Activated naive CD4-positive, alpha-beta T cell treated with anti-CD3 and anti-CD28 coated beads for 36 hours (primary cell): ENCODE measurements at regions of chr19 and their contacts with region 1.

Region 1: DNA sequence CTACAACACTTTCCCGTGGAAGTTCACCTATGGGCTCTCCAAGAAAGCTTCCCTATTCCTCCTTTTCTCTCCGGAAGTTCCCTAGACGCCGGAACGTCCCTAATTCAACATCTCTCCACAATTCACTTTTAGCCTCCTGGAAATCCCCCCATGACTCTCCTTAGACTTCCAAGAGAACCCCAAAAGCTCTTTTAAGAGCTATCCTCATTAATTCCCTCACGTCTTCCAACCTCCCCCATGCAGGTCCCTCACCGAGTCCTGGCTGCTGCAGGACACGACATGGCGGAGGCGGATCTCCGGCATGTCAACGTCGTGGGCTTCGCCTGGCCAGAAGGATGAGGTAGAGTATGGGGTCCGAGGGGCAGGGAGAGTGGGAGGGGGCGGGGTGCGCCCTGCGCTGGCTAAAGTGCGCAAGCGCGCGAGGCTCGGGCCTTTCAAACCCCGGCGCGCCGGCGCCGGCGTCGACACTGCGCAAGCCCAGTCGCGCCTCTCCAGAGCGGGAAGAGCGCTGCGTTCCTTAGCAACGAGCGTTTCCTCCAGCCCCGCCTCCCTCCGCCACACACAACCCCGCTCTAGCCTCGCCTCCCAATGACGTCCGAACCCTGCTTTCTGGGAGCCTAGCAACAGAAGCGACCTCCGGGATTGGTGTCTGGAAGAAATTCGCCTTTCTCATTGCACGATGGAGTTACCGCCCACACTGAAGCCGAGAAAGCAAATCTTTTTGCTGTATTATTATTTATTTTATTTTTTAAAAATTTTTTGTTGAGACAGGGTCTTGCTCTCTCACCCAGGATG is at the starts of genes PINLYP and XRCC1:
- DNase-seq: peak; percentile 99
- H3K4me3 Mint-ChIP-seq: peak within 1 kb of the TSS; percentile 95
- H3K27ac Mint-ChIP-seq: peak within 1 kb of the TSS; percentile 94
- H3K4me1 Mint-ChIP-seq: peaks cover 37% of the 10 kb centered on the region
- H3K27me3 Mint-ChIP-seq: no peaks in the 10 kb centered on the region
- total RNA-seq, gene PINLYP: 3.2 to 3.8 TPM
- total RNA-seq, gene XRCC1: 33.7 to 34.5 TPM

Region 2: GRCh38 chr19:43532962-43533545 is 42.3 kb before region 1 on chr19 and contains the start of gene ZNF575:
- CTCF ChIA-PET with region 1: interaction called, 5 read pairs
- intact Hi-C with region 1: loop called (anchors 1 kb)
- DNase-seq: peak; percentile 92
- H3K4me3 Mint-ChIP-seq: peak within 1 kb of the TSS; percentile 80
- H3K27ac Mint-ChIP-seq: peak within 1 kb of the TSS; percentile 88
- H3K4me1 Mint-ChIP-seq: peaks cover 19% of the 10 kb centered on the region
- H3K27me3 Mint-ChIP-seq: no peaks in the 10 kb centered on the region
- total RNA-seq, gene ZNF575: 3.1 to 5.2 TPM

Region 3: DNA sequence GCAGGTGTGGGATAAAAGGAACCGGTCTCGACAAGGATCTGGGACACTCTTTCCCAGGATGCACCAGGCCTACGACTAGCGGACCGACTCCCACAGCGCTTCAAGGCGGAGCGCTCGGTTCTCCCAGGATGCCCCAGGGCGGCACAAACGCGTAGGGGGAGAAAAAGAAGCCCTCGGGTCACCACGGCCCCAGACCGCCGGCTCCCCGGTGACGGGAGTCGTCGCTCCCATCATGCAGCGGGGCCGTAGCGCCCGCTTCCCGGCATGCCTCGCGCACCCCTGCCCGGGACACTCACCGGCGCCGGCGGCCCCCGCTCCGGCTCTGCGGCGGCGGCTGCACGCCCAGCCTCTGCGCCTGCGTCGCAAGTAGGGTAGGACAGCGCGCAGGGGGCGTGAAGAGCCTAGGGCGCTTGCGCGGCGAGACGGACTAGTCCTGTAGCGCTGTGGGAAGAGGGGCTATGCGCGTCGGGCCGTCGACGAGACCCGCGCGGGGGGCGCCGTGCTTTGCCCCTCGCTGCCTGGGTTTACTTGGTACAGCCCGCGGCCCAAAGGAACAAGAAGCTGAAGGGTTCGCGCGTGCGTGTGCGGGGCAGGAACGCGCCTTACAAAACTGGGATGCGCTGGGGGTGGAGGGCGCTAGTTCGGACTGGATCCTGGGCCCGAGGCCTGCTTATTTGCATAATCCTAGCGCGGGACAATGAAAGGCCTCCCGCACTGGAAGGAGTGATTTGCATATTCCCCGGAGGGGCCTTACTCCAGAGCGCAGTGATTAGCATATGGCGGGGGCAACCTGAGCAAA is 44.1 kb after region 1 on chr19 and contains the start of gene ZNF428:
- CTCF ChIA-PET with region 1: no interaction called
- intact Hi-C with region 1: loop called (anchors 1 kb)
- DNase-seq: peak; percentile 90
- H3K4me3 Mint-ChIP-seq: peak within 1 kb of the TSS; percentile 94
- H3K27ac Mint-ChIP-seq: peak within 1 kb of the TSS; percentile 96
- H3K4me1 Mint-ChIP-seq: peaks cover 19% of the 10 kb centered on the region
- H3K27me3 Mint-ChIP-seq: no peaks in the 10 kb centered on the region
- total RNA-seq, gene ZNF428: 11.4 to 11.8 TPM